ENCODE measurements at regions of chr12 and their contacts with region 1.

Region 1: DNA sequence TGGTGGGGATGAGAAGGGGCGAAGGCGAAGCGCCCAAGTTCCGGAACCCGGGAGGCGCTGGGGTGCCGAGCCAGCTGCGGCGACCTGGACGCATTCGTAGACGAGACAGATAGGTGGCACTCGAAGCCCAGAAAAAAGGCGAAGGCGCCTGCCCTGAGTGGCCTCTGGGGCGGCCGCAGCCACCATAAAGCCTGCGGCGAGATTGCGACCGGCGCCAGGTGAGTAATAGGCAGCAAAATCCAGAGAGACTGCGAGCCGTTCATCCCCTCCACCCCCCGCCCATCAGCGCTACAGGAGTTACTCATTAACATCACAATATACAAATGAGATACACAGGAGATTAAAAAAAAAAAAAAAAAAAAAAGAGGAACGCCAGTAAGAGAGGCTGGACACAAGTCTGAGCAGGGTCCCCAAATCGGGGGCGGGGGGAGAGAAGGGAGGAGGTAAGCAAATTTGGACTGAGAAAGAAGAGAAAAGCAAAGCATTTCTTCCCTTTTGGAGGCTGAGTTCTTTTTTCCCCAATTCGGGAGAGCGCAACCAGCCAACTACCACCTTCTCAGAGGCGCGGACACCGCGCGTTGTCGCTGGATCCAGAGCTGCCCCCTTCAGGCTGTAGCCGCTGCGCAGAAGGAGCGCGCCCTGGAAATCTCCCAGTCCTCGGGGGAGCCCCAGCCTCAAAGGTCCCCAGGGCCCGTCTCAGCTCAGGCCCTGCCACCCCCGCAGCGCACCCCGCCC is 15.7 kb downstream of the TBX3 start:
- DNase-seq: peak; percentile 80
- ATAC-seq: peak; percentile 96

Region 2: DNA sequence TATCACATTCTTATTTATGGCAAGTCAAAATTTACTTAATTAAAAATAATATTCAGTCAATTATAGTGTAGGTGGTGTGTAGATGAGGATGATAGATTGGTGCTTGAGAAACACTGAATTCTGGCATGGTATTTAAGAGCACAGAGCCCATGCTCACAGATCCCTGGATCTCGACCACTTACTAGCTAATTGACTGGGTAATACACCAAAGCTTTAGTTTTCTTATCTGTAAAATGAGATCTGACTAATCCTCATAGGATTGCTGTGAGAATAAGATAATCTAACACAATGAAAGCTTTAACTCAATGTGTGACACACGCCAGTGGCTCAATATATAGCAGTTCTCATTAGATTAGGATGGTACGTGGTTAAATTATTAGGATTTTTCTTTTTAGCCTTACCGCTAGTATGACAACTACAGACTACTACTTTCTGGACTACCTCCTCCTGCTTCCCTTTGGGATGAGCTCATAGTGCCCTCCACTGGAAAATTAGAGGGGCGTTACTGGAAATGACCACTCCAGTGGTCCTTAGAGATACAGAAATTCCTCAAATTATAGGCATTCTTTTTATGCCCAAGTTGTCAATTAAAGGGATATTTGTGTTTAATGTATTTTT is 498.5 kb after region 1 on chr12:
- intact Hi-C with region 1: loop called (anchors 10 kb)
- DNase-seq: no peak
- ATAC-seq: no peak

Region 3: GRCh38 chr12:115451780-115452736 is 783.7 kb after region 1 on chr12:
- intact Hi-C with region 1: loop called (anchors 10 kb)
- DNase-seq: peak; percentile 64
- ATAC-seq: peak; percentile 75

Region 4: DNA sequence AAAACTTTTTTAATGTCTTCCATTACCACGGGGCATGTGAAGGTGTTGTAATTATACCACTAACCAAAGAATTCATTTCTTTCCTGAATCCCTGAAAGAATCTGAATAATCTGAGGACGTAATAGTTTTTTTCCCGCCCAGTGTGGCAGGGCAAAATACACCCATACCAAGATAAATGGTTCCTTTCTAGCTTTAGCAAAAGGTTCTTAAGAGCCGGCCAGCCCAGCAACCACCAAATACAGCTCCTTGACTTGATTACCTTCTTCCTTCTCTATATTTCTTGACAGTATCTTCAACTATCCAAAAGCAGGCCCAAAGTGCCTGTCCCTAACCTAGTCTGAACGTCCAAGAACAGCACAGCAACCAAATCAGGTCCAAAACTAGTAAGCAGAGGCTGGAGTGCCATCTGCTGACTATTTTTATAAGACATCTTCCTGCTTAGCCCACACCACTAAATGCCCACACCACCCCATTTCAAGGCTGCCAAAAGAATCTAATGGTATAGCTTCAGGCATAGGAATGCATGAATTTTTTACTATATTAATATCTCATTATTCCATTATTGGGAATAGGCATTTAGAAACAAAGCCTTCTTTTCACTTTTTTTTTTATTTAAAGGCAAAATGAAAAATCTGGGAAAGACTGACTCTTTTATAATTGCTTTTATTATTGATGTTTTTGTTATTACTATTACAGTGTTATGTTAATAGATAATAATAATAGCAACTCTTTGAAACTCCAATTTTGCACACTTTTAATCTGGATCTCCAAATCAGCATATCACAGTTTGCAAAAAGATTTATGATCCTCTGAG is 1084.8 kb after region 1 on chr12:
- intact Hi-C with region 1: loop called (anchors 5 kb)
- DNase-seq: no peak
- ATAC-seq: peak; percentile 92